A549 (cell line): ENCODE measurements at regions of chr6 and their contacts with region 1.

Region 1: GRCh38 chr6:25601800-25602673 is 50.0 kb upstream of the SCGN start:
- DNase-seq: peak; percentile 28 to 42
- ATAC-seq: 0 out of 6 replicates have a peak, but pooled peaks of 1 of the 2 experiments have one; percentile 40
- H3K4me3 ChIP-seq: no peak overlapping the region
- H3K27ac ChIP-seq: no peak overlapping the region
- H3K4me1 ChIP-seq: 0 out of 3 replicates have a peak, but pooled peaks cover 2% of the 10 kb centered on the region
- CTCF ChIP-seq: peak; percentile 64
- EP300 ChIP-seq: no peak
- POLR2A ChIP-seq: no peak
- RAD21 ChIP-seq: peak; percentile 70 to 78

Region 2: DNA sequence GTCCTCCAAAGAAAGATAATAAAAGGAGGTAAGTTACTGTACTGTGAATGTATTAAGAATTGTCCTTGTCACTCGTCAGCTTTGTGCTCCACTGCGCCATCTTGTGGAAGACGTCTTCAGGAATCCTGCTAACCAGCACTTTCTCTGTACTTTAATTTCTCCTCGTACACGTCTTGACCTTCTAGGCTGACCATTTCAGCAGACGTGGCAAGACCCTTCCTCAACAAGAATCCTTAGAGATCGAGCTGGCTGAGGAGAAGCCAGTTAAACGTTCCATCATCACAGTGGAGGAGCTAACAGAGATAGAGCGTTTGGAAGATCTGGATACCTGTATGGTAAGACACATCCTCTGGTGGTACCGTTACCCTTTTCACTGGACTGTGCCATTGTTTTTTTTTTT is 45.5 kb before region 1 on chr6:
- CTCF ChIA-PET with region 1: no interaction called
- POLR2A ChIA-PET with region 1: no interaction called
- DNase-seq: peak; percentile 15 to 71
- ATAC-seq: peak; percentile 71 to 82; a peak in 4 of 6 replicates
- H3K4me3 ChIP-seq: no peak overlapping the region
- H3K27ac ChIP-seq: no peak overlapping the region
- H3K4me1 ChIP-seq: no peaks in the 10 kb centered on the region
- CTCF ChIP-seq: peak; percentile 74
- EP300 ChIP-seq: no peak
- POLR2A ChIP-seq: no peak
- RAD21 ChIP-seq: peak; percentile 53 to 59

Region 3: DNA sequence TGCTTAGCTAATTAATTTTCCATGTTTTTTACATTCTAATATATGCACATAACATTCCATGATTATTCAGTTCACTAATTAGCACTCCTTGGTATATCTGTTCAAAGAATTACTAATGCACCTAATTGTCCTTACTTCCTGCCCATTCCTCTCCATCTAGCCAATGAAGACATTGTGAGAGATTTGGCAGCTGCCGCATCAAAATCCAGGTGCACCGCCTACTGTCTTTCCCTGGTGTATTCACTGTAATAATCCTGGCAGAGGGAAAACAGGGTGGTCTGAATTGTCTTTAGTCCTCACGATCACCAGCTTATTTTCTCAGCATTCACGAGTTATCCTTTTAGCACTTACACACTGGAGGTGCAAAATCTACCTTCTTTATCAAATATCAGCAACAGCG is 11.1 kb before region 1 on chr6:
- CTCF ChIA-PET with region 1: interaction called, 16 read pairs
- POLR2A ChIA-PET with region 1: no interaction called
- DNase-seq: no peak
- ATAC-seq: no peak
- H3K4me3 ChIP-seq: no peak overlapping the region
- H3K27ac ChIP-seq: no peak overlapping the region
- H3K4me1 ChIP-seq: no peaks in the 10 kb centered on the region
- CTCF ChIP-seq: no peak
- EP300 ChIP-seq: no peak
- POLR2A ChIP-seq: no peak
- RAD21 ChIP-seq: no peak

Region 4: DNA sequence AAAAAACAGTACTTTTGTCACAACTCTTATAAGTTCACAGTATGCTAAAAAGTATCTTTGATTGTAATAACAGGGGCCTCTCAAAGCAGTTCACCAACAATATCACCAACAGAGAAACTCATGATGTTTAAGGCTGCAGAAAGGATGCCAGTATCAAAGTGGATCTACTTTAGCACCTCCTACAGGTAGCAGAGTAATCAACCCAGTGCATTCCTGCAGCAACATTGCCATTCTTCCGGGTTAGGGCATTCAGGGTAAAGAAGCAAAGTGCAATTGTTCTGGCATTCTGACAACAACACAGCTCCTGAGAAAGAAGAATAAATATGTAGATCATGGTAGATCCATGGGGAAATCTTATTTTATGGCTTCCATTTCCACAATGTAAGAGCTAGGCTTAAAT is 144.9 kb after region 1 on chr6:
- CTCF ChIA-PET with region 1: no interaction called
- POLR2A ChIA-PET with region 1: no interaction called
- DNase-seq: no peak
- ATAC-seq: no peak
- H3K4me3 ChIP-seq: no peak overlapping the region
- H3K27ac ChIP-seq: no peak overlapping the region
- H3K4me1 ChIP-seq: peaks cover 4% of the 10 kb centered on the region; the same call in 1 of the 3 replicates
- CTCF ChIP-seq: no peak
- EP300 ChIP-seq: no peak
- POLR2A ChIP-seq: no peak
- RAD21 ChIP-seq: no peak

Region 5: DNA sequence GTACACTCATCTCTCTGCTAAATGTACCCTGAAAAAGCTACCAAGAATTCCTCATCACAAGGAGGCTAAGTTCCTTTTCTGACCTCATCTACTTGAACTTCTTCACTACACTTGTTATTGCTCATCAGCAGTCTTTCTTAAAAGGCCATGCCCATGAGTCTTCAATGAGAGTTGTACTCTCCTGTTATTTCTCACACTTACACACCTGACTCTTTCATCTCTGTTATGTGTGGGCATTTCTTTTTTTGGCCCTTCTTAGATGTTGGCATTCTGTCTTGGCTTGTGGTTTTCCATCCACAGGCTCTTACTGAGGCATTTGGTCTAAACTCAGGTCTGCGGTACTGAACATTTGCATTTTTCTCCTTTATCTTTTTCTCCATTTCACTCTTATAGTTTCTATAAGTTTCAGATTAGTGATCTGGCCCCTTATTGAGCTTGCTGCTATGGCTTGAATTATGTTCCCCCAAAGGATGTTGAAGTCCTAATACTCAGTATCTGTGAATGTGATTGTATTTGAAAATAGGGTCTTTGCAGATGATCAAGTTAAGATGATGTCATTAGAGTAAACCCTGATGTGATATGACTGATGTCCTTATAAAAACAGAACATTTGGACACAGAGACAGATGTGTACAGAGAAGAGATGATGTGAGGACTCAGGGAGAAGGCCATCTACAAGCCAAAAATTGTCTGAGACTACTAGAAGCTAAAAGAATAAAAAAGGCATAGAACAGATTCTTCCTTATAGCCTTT is 240.7 kb after region 1 on chr6:
- CTCF ChIA-PET with region 1: no interaction called
- POLR2A ChIA-PET with region 1: no interaction called
- DNase-seq: no peak
- ATAC-seq: no peak
- H3K4me3 ChIP-seq: no peak overlapping the region
- H3K27ac ChIP-seq: no peak overlapping the region
- H3K4me1 ChIP-seq: no peaks in the 10 kb centered on the region
- CTCF ChIP-seq: no peak
- EP300 ChIP-seq: no peak
- POLR2A ChIP-seq: no peak
- RAD21 ChIP-seq: no peak